Ascending aorta (tissue), 2 donors: ENCODE measurements at regions of chr16 and their contacts with region 1.

Region 1: DNA sequence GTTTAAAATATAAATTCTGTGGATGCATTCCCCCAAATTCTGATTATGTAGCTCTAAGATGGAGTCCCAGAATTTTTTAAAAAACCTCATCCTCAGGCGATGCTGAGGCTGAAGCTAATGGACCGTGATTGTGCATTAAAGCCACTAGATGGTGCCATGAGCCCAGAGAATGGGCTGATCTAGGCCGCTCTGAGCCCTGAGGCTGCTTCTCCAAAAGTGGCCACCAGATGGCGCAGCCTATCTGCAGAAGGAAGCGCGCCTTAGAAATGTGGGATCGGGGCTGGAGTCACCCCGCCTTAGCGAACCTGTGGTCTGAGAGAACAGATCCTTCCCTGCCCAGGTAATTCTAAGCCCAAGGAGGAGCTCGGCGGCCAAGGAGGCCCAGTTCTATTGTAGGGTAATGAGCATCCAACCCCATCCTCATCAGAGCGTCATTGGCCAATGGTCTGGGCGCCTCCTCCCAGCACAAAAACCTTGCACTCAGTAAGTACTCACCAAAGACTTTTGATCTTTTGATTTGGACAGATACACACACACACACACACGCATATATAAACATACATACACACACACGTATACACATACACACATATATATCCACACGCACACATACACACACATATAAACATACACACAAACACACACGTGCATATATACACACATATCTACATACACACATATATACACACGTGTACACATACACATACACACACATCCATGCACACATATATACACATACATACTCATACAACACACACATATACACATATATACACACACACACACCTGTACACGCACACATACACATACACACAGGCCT is 13.7 kb upstream of the MMP2 start:
- DNase-seq: peak; percentile 26 to 95
- H3K4me3 ChIP-seq: peak overlapping the region in 1 of 2 donors; percentile 11
- H3K27ac ChIP-seq: no peak overlapping the region
- H3K4me1 ChIP-seq: no peaks in the 10 kb centered on the region
- H3K27me3 ChIP-seq: no peaks in the 10 kb centered on the region
- CTCF ChIP-seq: peak; percentile 99 to 100 (median 99)

Region 2: GRCh38 chr16:55502801-55503366 is 37.6 kb after region 1 on chr16:
- intact Hi-C with region 1: loop called (anchors 5 kb)
- DNase-seq: peak in 1 of 2 donors; percentile 82
- H3K4me3 ChIP-seq: no peak overlapping the region
- H3K27ac ChIP-seq: peak overlapping the region; percentile 37 to 59
- H3K4me1 ChIP-seq: peaks cover 3 to 23% of the 10 kb centered on the region in 2 donors
- H3K27me3 ChIP-seq: no peaks in the 10 kb centered on the region
- CTCF ChIP-seq: no peak

Region 3: DNA sequence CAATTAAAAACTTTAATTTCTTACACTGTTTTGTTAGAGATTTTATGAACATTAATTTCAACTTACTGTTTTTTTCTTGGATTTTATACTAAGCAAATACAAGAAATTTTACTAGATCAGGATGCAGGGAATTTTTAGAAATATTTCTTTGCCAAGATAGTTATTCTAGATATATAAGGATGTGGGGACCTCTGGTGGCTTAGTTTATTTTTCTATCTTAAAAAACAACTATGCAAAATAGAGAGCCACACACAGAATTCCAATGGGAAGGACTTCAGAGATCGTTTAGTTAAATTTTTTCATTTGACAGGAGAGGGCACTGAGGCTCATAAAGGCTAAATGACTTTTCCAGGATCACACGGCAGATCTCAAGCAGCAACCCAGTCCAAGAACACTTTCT is 78.2 kb after region 1 on chr16:
- intact Hi-C with region 1: loop called (anchors 1 kb)
- DNase-seq: no peak
- H3K4me3 ChIP-seq: no peak overlapping the region
- H3K27ac ChIP-seq: no peak overlapping the region
- H3K4me1 ChIP-seq: no peaks in the 10 kb centered on the region
- H3K27me3 ChIP-seq: no peaks in the 10 kb centered on the region
- CTCF ChIP-seq: peak; percentile 26 to 53 (median 50)

Region 4: GRCh38 chr16:55701442-55702319 is 236.4 kb after region 1 on chr16:
- intact Hi-C with region 1: loop called (anchors 1 kb)
- DNase-seq: peak in 1 of 2 donors; percentile 70
- H3K4me3 ChIP-seq: no peak overlapping the region
- H3K27ac ChIP-seq: no peak overlapping the region
- H3K4me1 ChIP-seq: no peaks in the 10 kb centered on the region
- H3K27me3 ChIP-seq: no peaks in the 10 kb centered on the region
- CTCF ChIP-seq: peak; percentile 25 to 51 (median 27)

Region 5: DNA sequence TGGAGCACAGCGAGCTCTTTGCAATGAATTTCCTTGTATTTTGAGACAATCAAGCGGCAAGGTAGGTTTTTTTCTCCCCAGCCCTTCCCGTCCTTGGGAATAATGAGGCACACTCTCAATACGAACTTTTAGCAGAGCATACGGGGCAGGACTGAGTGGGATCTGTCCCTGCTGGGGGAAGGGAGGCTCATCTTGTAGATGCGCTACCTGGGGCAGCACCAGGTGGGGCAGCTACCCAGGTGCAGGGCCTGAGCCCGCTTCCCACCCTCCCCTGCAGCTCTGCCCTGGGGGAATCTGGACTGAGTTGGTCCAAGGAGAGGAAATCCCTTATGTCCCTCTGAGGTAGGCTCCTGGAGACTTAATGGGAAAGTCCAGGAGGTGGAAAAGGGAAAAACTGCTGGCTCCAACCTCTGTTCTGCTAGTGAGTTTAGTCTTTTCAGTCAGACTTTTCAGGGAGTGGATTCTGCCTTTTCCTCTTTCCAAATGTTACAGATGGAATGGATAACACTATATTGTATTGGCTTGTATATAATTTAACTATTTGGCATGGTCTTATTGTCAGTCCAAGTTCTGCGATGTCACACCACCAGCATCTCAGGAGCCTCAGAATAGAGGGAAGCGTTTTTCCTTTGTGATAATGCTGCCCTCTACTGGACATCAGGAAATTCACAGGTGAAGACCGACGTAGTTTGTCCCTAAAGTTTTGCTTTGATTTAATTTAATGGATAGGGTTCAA is 377.2 kb after region 1 on chr16:
- intact Hi-C with region 1: loop called (anchors 5 kb)
- DNase-seq: no peak
- H3K4me3 ChIP-seq: no peak overlapping the region
- H3K27ac ChIP-seq: no peak overlapping the region
- H3K4me1 ChIP-seq: no peaks in the 10 kb centered on the region
- H3K27me3 ChIP-seq: no peaks in the 10 kb centered on the region
- CTCF ChIP-seq: peak; percentile 59 to 78 (median 76)